ENCODE measurements at regions of chr11 and their contacts with region 1.

Region 1: GRCh38 chr11:3011891-3012885 is 20.1 kb upstream of the NAP1L4 start:
- DNase-seq: no peak
- H3K4me3 ChIP-seq: no peak overlapping the region
- H3K27ac ChIP-seq: no peak overlapping the region
- H3K4me1 ChIP-seq: peaks cover 17% of the 10 kb centered on the region
- H3K27me3 ChIP-seq: no peaks in the 10 kb centered on the region
- CTCF ChIP-seq: no peak

Region 2: GRCh38 chr11:2975594-2975993 is 36.6 kb before region 1 on chr11:
- CTCF ChIA-PET with region 1: no interaction called
- dilution Hi-C with region 1: no loop called
- in situ Hi-C with region 1: no loop called
- intact Hi-C with region 1: loop called (anchors 2 kb)
- DNase-seq: no peak
- H3K4me3 ChIP-seq: no peak overlapping the region
- H3K27ac ChIP-seq: no peak overlapping the region
- H3K4me1 ChIP-seq: peaks cover 6% of the 10 kb centered on the region
- H3K27me3 ChIP-seq: no peaks in the 10 kb centered on the region
- CTCF ChIP-seq: peak; percentile 49 to 64

Measured in mammary epithelial cell (primary cell).